Activated CD4-positive, alpha-beta memory T cell treated with anti-CD3 and anti-CD28 coated beads for 36 hours (primary cell): ENCODE measurements at regions of chr3 and their contacts with region 1.

Region 1: DNA sequence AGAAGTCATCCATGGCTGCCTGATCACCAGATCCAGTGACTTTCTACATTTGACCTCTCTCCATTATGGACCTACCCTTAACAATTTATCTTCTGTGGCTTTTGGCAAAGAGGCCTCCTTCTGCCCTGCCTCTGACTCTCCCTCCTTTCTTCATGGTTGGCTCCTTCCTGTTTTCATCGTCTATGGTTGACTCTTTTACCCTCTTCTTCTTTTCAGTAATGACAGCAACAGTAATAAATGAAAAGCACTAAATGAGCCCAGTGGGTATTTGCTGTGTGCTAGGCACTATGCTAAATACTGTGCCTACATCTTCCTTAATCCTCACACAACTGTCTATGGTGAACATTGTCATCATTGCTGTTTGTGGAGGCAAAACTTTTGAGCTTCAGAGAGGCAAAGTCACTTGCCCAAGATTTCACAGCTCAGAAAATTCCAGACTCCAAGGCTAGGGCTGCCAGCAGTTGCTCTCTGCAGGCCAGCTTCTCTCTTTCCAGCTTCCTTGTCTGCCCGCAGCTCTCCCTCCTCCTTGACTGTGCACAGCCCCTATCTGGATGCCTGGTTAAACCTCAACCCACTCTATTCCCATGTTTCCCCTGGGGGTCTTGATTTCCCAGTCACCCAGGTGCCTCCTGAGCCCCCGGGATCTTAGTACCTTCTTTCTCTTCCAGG is 24.6 kb downstream of the ITPR1 start:
- DNase-seq: no peak
- H3K4me3 Mint-ChIP-seq: no peak overlapping the region
- H3K27ac Mint-ChIP-seq: peak overlapping the region; percentile 69
- H3K4me1 Mint-ChIP-seq: peaks cover 28% of the 10 kb centered on the region
- H3K27me3 Mint-ChIP-seq: no peaks in the 10 kb centered on the region

Region 2: GRCh38 chr3:4406746-4407568 is 110.8 kb before region 1 on chr3:
- CTCF ChIA-PET with region 1: interaction called, 3 read pairs
- POLR2A ChIA-PET with region 1: no interaction called
- intact Hi-C with region 1: loop called (anchors 1 kb)
- DNase-seq: no peak
- H3K4me3 Mint-ChIP-seq: no peak overlapping the region
- H3K27ac Mint-ChIP-seq: no peak overlapping the region
- H3K4me1 Mint-ChIP-seq: peaks cover 47% of the 10 kb centered on the region
- H3K27me3 Mint-ChIP-seq: no peaks in the 10 kb centered on the region

Region 3: GRCh38 chr3:4454142-4454541 is 63.6 kb before region 1 on chr3:
- CTCF ChIA-PET with region 1: no interaction called
- POLR2A ChIA-PET with region 1: no interaction called
- intact Hi-C with region 1: no loop called
- DNase-seq: no peak
- H3K4me3 Mint-ChIP-seq: no peak overlapping the region
- H3K27ac Mint-ChIP-seq: no peak overlapping the region
- H3K4me1 Mint-ChIP-seq: peaks cover 5% of the 10 kb centered on the region
- H3K27me3 Mint-ChIP-seq: no peaks in the 10 kb centered on the region

Region 4: DNA sequence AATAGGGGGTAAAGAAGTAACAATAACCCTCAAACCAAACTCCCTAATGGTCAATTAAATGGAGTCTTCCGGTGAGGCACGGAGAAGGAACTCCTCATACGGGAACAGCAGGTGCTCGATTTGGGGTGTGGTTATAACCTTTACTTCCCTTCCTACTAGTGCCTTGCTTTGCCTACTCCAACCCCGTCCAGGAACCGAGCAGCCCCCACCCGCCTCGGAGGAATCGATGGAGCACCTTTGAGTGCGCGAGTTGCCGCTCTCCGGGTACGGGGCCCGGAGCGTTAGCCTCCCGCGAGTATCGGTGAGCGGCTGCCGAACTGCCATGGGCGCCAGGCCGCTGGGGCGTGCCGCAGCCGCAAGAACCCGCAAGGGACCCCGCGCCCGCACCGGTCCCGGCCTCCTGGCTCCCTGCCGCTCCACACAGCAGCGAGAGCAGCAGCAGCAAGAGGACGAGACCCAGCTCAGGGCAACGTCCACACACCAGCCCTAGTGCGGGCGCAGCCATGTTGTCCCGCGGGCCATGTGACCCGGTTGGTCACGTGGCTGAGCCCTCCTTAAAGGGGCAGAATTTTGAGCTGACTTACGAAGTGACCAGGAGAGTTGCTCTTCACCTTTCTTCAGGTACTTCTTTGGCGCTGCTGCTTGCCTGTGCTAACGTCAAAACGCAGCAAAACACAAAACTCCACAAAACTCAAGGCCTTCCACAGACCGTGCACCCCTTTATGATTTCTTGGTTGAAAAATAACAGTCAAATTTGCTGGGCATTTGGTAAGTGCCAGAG is 50.8 kb before region 1 on chr3 and contains the start of gene SUMF1:
- CTCF ChIA-PET with region 1: interaction called, 6 read pairs
- POLR2A ChIA-PET with region 1: interaction called, 4 read pairs
- intact Hi-C with region 1: loop called (anchors 2 kb)
- DNase-seq: peak; percentile 84
- H3K4me3 Mint-ChIP-seq: peak within 1 kb of the TSS; percentile 90
- H3K27ac Mint-ChIP-seq: peak within 1 kb of the TSS; percentile 87
- H3K4me1 Mint-ChIP-seq: peaks cover 14% of the 10 kb centered on the region
- H3K27me3 Mint-ChIP-seq: no peaks in the 10 kb centered on the region
- total RNA-seq, gene SUMF1: 5.1 to 5.6 TPM

Region 5: GRCh38 chr3:4504340-4505261 is 13.2 kb before region 1 on chr3:
- CTCF ChIA-PET with region 1: interaction called, 15 read pairs
- POLR2A ChIA-PET with region 1: interaction called, 6 read pairs
- intact Hi-C with region 1: loop called (anchors 1 kb)
- DNase-seq: peak; percentile 44
- H3K4me3 Mint-ChIP-seq: peak overlapping the region; percentile 75
- H3K27ac Mint-ChIP-seq: peak overlapping the region; percentile 84
- H3K4me1 Mint-ChIP-seq: peaks cover 50% of the 10 kb centered on the region
- H3K27me3 Mint-ChIP-seq: no peaks in the 10 kb centered on the region

Region 6: GRCh38 chr3:4533489-4534443 is 16.0 kb after region 1 on chr3:
- CTCF ChIA-PET with region 1: interaction called, 10 read pairs
- POLR2A ChIA-PET with region 1: no interaction called
- intact Hi-C with region 1: no loop called
- DNase-seq: no peak
- H3K4me3 Mint-ChIP-seq: no peak overlapping the region
- H3K27ac Mint-ChIP-seq: no peak overlapping the region
- H3K4me1 Mint-ChIP-seq: peaks cover 10% of the 10 kb centered on the region
- H3K27me3 Mint-ChIP-seq: no peaks in the 10 kb centered on the region